Psoas muscle (tissue), 8 donors: ENCODE measurements at regions of chr10 and their contacts with region 1.

Region 1: GRCh38 chr10:25113191-25114035 is 61.4 kb upstream of the GPR158 start:
- DNase-seq: peak; percentile 57 to 75
- ATAC-seq: peak; percentile 52 to 84 (median 78)
- H3K4me3 ChIP-seq: no peak overlapping the region
- H3K27ac ChIP-seq: no peak overlapping the region
- H3K4me1 ChIP-seq: no peaks in the 10 kb centered on the region
- H3K27me3 ChIP-seq: peaks cover 0 to 5% (median 0%) of the 10 kb centered on the region in 3 donors
- CTCF ChIP-seq: peak; percentile 71

Region 2: DNA sequence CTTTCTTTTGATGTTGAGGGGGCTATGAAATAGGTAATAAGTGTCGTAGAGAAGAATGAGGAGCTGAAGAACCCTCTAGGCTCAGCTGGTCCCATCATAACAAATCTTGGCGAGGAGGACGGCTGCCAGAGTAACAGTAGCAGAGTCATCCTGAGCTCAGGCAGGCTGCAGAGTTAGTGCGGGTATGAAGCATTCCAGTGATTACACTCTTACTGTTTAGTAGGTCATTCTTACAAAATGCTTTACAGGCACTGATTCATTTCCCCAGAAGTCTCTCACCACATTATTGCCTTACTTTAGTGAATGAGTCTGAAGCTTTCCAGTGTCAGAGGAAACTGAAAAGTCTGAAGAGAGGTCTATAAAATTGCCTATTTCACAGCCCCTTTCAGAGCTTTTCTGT is 17.5 kb after region 1 on chr10:
- intact Hi-C with region 1: loop called in 1 of 2 experiments (anchors 1 kb)
- DNase-seq: no peak
- ATAC-seq: no peak
- H3K4me3 ChIP-seq: no peak overlapping the region
- H3K27ac ChIP-seq: no peak overlapping the region
- H3K4me1 ChIP-seq: no peaks in the 10 kb centered on the region
- H3K27me3 ChIP-seq: no peaks in the 10 kb centered on the region
- CTCF ChIP-seq: no peak

Region 3: DNA sequence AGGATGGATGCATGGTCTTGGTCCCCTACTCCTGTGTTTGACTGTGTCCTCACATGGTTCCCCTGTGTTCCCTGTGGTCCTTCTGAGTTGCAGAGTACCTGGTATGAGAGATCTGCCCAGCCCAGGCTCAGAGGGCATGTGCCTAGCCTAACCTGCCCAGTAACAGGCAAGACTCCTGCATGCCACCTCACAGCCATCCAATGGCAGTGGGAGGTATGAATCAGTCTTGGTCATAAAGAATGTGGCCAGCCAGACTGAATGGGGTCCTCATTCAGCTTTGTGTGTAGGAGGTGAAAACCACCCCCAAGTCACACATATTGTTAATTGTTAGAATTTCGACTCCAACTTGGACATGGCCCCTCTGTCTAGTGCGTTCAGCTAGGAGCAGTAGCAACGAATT is 44.2 kb after region 1 on chr10:
- intact Hi-C with region 1: no loop called
- DNase-seq: no peak
- ATAC-seq: no peak
- H3K4me3 ChIP-seq: no peak overlapping the region
- H3K27ac ChIP-seq: no peak overlapping the region
- H3K4me1 ChIP-seq: no peaks in the 10 kb centered on the region
- H3K27me3 ChIP-seq: no peaks in the 10 kb centered on the region
- CTCF ChIP-seq: no peak

Region 4: DNA sequence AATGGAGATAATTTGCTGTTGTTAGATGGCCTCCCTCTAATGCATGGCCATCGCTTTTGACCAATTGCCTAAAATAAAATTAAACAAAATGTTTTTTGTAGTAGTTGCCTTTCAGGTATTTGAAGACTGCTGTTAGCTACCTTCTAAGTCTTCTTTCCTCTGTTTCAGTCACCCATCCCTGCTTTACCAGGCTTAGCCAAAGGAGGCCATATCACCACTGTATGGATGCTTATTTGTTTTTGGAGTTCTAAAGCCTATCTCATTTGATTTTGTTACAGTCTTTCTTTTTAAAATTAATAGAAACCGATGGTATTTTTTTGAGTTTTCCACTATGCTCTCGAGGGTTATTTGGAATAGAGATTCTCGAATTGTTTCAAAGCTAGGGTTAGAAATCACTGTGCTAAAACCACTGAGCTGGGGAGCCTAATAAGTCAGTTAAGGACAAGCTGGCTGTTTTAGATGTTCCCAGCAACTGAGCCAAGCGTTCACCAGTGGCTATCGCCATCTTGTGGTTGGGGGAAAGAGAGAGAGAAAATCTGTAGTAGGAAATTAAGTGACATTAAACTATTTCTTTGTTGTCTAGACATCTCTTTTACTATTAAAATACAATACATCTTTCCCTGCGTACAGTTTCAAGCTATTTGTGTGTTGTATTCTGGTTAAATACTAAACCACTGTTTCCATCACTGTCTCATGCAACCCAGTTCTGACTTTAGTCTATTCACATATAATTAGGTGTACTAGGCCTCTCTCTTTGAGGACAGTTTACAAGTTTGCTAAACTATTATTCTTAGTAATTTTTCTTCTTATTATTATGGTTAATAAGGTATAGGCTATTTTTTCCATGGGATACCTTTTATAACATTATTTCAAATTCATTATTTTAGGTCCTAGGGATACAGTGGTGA is 113.6 kb after region 1 on chr10:
- intact Hi-C with region 1: loop called (anchors 5 kb)
- DNase-seq: no peak
- ATAC-seq: no peak
- H3K4me3 ChIP-seq: no peak overlapping the region
- H3K27ac ChIP-seq: no peak overlapping the region
- H3K4me1 ChIP-seq: no peaks in the 10 kb centered on the region
- H3K27me3 ChIP-seq: no peaks in the 10 kb centered on the region
- CTCF ChIP-seq: peak; percentile 48

Region 5: DNA sequence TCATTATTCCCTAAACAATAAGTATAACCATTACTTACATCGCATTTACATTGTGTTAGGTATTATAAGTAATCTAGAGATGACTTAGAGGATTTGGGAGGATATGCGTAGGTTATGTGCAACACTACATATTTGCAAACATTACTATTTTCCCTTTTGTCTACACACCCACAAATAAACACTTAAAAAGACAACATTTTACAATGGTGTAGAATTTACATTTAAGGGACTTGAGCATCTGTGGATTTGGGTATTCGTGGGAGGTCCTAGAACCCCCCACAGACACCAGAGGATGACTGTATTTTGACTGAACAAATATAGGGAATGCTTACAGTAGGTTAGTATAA is 600.5 kb after region 1 on chr10:
- intact Hi-C with region 1: loop called (anchors 5 kb)
- DNase-seq: no peak
- ATAC-seq: no peak
- H3K4me3 ChIP-seq: no peak overlapping the region
- H3K27ac ChIP-seq: no peak overlapping the region
- H3K4me1 ChIP-seq: no peaks in the 10 kb centered on the region
- H3K27me3 ChIP-seq: no peaks in the 10 kb centered on the region
- CTCF ChIP-seq: no peak